Right cardiac atrium (tissue), 5 donors: ENCODE measurements at regions of chr7 and their contacts with region 1.

Region 1: GRCh38 chr7:44986218-44987053 is 7.6 kb upstream of the MYO1G start:
- DNase-seq: peak; percentile 96 to 98 (median 98)
- ATAC-seq: peak; percentile 97 to 98
- H3K4me3 ChIP-seq: peak overlapping the region; percentile 28
- H3K27ac ChIP-seq: peak overlapping the region; percentile 79
- H3K4me1 ChIP-seq: peaks cover 2% of the 10 kb centered on the region
- H3K27me3 ChIP-seq: no peaks in the 10 kb centered on the region

Region 2: GRCh38 chr7:45035893-45036292 is 49.5 kb after region 1 on chr7:
- intact Hi-C with region 1: no loop called
- DNase-seq: no peak
- ATAC-seq: no peak
- H3K4me3 ChIP-seq: no peak overlapping the region
- H3K27ac ChIP-seq: no peak overlapping the region
- H3K4me1 ChIP-seq: peaks cover 2% of the 10 kb centered on the region
- H3K27me3 ChIP-seq: no peaks in the 10 kb centered on the region

Region 3: DNA sequence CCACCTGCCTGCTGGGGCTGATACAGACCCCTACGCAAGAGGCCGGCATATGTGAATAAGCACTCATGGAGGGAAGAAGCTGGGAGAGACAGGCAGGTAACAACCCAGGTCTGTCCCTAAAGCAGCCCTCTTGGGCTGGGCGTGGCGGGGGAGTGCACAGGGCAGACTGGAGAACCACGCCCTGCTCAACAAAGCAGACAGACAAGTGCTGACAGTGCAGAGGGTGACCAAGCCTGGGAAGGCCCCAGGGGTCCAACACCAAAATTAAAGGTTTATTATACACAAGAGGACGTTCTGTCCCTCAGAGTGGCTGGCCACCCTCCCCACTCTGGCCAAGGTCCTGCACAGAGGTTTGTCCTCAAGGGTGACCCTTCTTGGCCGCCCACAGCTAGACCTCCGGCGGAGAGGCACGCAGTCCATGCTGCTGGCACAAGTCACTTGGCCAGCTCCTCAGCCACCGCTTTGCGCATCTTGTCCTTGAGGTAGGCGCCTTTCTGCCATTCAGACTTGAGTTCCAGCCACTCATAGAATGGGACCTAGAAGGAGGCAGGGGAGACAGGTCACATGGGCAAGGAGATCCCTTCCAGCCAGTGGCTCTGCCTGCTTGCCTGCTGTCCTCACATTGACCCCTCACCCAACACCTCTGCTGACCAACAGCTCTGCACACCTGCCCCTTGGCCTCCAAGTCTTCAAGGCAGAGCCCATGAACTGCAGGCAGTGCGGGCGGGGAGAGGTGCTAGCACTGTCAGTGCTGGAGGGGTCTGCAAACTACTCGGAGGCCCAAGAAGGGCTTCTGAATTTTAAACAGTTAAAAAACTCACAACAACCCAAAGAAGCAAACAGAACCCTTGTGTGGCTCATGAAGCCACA is 113.7 kb after region 1 on chr7:
- intact Hi-C with region 1: loop called in 1 of 4 experiments (anchors 10 kb)
- DNase-seq: peak in 1 of 3 donors; percentile 46
- ATAC-seq: peak; percentile 16 to 17
- H3K4me3 ChIP-seq: no peak overlapping the region
- H3K27ac ChIP-seq: no peak overlapping the region
- H3K4me1 ChIP-seq: peaks cover 2% of the 10 kb centered on the region
- H3K27me3 ChIP-seq: no peaks in the 10 kb centered on the region

Region 4: GRCh38 chr7:45563941-45564461 is 577.6 kb after region 1 on chr7:
- intact Hi-C with region 1: no loop called
- DNase-seq: peak in 2 of 3 donors; percentile 39 to 81
- ATAC-seq: peak; percentile 56 to 65
- H3K4me3 ChIP-seq: peak overlapping the region; percentile 24
- H3K27ac ChIP-seq: peak overlapping the region; percentile 5
- H3K4me1 ChIP-seq: peaks cover 11% of the 10 kb centered on the region
- H3K27me3 ChIP-seq: no peaks in the 10 kb centered on the region